Left ventricle myocardium superior (tissue), 1 donor: ENCODE measurements at regions of chr2 and their contacts with region 1.

Region 1: DNA sequence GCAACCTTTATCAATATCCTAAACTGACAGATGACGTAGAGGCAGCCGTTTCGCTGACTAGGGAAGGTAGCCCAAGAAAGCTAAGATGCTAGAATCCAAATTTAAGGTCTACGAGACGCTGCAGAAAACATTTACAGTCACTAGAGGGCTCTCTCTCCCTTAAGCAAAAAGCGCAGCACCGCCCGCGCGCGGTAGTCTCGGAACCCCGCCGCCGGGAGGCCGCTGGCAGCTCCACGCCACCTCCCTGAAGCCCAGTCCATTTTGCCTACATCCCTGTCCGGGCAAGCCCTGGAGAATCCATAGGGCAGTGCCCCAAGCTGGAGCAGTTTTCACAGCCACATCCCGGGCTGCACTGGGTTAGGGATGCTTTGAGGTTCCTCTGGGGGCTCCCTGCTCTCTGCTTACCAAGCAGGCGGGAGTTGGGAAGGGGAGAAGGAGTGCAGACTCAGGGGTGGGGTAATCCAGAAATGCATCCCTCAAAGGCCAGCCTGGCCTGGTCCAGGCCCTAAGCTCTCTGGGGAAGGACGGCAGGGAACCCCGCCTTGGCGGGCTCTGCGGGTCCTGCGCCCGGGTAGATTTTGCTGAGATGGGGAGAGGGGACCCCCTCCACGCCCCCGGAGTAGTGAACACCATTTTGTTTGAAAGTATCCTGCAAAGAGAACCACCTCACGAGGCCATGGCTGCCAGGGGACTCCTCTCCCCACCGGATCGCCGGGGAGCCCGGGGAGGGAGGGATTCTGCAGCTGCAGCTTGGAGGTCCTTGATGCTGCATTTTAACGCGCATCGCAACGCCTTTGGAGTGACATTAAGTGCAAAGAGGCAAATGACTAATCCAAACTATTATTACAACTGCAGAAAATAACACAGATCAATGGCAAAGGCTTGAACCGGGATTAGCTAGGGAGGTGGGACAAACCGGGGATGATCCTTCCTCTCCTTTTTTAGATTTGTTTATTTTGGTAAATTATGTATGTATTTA is 1.3 kb upstream of the DPYSL5 start:
- DNase-seq: peak; percentile 85
- ATAC-seq: peak; percentile 88

Region 2: DNA sequence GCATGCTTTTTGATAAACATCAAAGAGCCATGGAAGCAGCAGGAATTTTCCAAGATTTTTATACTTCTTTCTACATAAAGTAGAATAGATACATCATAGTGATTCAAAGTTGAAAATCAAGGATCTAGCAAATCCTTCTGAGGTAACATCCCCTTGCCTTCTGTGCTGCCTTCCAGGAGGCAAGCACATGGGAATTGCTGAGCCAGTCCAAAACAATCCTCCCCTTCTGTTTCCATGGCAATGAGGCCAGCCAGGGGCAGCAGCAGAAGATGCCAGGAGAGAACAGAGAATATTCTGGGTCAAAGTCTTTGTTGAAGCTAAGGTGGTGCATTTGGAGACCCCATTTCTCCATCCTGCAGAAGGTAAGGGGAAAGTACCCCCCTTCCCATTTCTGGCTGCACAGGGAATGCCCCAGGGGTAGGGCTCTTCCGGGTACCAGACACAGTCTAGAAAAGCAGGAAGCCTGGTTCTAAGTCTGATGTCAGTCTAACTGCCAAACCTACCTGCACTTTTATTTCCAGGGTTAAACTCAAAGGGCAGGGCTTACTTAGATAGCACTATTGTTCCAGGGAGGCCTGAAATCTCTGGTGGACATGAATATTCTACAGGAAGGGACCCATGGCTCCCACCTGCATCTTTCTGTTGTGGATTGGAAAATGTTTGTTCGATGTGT is 38.7 kb before region 1 on chr2:
- intact Hi-C with region 1: no loop called
- DNase-seq: no peak
- ATAC-seq: no peak

Region 3: GRCh38 chr2:26925087-26925791 is 78.6 kb after region 1 on chr2:
- intact Hi-C with region 1: loop called (anchors 5 kb)
- DNase-seq: no peak
- ATAC-seq: no peak

Region 4: GRCh38 chr2:27016801-27017325 is 170.2 kb after region 1 on chr2:
- intact Hi-C with region 1: no loop called
- DNase-seq: peak; percentile 62
- ATAC-seq: peak; percentile 48